CD8-positive, alpha-beta T cell (primary cell): ENCODE measurements at regions of chr11 and their contacts with region 1.

Region 1: DNA sequence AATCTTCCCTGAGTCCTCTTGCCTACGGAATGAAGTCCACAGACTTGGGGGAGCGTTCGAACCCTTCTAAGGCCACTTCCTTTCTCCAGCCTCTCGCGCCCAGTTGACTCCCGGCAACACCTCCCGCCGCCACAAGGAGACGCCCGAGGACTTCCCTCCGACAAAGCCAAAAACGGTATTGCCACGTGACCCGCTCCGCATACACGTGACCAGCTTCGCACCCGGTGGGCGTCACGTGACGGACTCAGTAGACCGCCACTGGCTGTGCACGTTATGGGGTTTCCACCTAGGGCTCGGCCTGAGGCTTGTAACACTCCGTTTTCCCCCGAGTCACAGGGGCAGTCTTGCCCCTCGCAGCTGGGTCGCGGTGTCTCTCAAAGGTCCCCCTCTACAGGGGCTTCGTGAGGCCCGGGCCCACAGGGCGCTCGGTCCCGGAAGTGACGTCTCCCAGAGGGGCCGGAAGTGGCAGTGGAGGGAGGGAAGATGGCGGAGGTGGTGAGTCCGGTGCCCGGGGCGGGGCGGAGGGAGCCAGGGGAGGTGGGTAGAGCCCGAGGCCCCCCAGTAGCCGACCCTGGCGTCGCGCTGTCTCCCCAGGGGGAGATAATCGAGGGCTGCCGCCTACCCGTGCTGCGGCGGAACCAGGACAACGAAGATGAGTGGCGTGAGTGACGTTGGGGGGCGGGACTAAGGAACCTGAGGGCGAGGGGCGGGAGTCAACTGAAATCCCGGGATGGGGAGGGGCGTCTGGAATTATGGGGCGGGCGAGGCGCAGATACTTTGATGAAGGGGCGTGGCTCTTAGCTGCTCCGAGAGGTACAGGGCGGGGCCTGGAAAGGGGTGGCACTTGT is at the start of gene KAT5:
- DNase-seq: peak; percentile 95 to 99 (median 98)
- ATAC-seq: peak; percentile 83
- H3K4me3 ChIP-seq: peak within 1 kb of the TSS; percentile 92 to 99
- H3K4me3 Mint-ChIP-seq: peak within 1 kb of the TSS; percentile 95
- H3K27ac ChIP-seq: peak within 1 kb of the TSS; percentile 99 to 100
- H3K27ac Mint-ChIP-seq: peak within 1 kb of the TSS; percentile 100
- H3K4me1 ChIP-seq: peaks cover 14% of the 10 kb centered on the region
- H3K4me1 Mint-ChIP-seq: peaks cover 21% of the 10 kb centered on the region
- H3K27me3 ChIP-seq: no peaks in the 10 kb centered on the region
- H3K27me3 Mint-ChIP-seq: no peaks in the 10 kb centered on the region
- CTCF ChIP-seq: peak; percentile 95
- total RNA-seq, gene KAT5: 149 to 151 TPM

Region 2: DNA sequence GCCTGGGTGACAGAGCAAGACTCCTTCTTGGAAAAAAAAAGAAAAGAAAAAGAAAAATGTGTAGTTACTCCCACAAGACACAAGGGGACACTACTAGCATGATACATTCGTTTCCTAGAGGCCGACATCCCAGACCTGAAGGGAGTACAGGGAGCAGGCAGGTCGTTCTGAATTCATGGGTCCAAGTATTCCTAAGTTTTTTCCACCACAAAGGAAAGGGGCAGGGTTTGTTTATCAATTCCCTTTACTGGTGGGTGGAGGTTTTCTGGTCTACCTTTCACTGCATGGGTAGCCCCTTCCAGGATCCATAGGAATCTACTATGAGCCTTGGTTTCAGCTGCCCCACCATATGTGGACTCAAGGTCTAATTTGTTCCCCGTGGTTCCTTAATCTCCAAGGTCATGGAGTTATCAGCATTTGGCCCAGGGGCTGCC is 345.7 kb before region 1 on chr11:
- CTCF ChIA-PET with region 1: no interaction called
- POLR2A ChIA-PET with region 1: no interaction called
- intact Hi-C with region 1: loop called in 1 of 2 experiments (anchors 2 kb)
- DNase-seq: peak in 3 of 9 experiments; percentile 31 to 80 (median 70)
- ATAC-seq: peak; percentile 92
- H3K4me3 ChIP-seq: no peak overlapping the region
- H3K4me3 Mint-ChIP-seq: no peak overlapping the region
- H3K27ac ChIP-seq: no peak overlapping the region
- H3K27ac Mint-ChIP-seq: no peak overlapping the region
- H3K4me1 ChIP-seq: peaks cover 6% of the 10 kb centered on the region
- H3K4me1 Mint-ChIP-seq: peaks cover 5% of the 10 kb centered on the region
- H3K27me3 ChIP-seq: no peaks in the 10 kb centered on the region
- H3K27me3 Mint-ChIP-seq: no peaks in the 10 kb centered on the region
- CTCF ChIP-seq: peak; percentile 81

Region 3: GRCh38 chr11:65773784-65774411 is 61.9 kb after region 1 on chr11:
- CTCF ChIA-PET with region 1: interaction called, 30 read pairs
- POLR2A ChIA-PET with region 1: no interaction called
- intact Hi-C with region 1: loop called (anchors 1 kb)
- DNase-seq: no peak
- ATAC-seq: no peak
- H3K4me3 ChIP-seq: no peak overlapping the region
- H3K4me3 Mint-ChIP-seq: no peak overlapping the region
- H3K27ac ChIP-seq: no peak overlapping the region
- H3K27ac Mint-ChIP-seq: no peak overlapping the region
- H3K4me1 ChIP-seq: peaks cover 6% of the 10 kb centered on the region
- H3K4me1 Mint-ChIP-seq: peaks cover 7% of the 10 kb centered on the region
- H3K27me3 ChIP-seq: no peaks in the 10 kb centered on the region
- H3K27me3 Mint-ChIP-seq: no peaks in the 10 kb centered on the region
- CTCF ChIP-seq: no peak

Region 4: GRCh38 chr11:65833297-65834030 is 121.5 kb after region 1 on chr11 and contains the start of gene SNX32:
- CTCF ChIA-PET with region 1: interaction called, 5 read pairs
- POLR2A ChIA-PET with region 1: no interaction called
- intact Hi-C with region 1: loop called in 1 of 2 experiments (anchors 1 kb)
- DNase-seq: peak; percentile 90 to 97 (median 94)
- ATAC-seq: peak; percentile 99
- H3K4me3 ChIP-seq: peak within 1 kb of the TSS; percentile 79 to 91
- H3K4me3 Mint-ChIP-seq: no peak within 1 kb of the TSS
- H3K27ac ChIP-seq: peak within 1 kb of the TSS; percentile 66 to 80
- H3K27ac Mint-ChIP-seq: peak within 1 kb of the TSS; percentile 64
- H3K4me1 ChIP-seq: peaks cover 17% of the 10 kb centered on the region
- H3K4me1 Mint-ChIP-seq: peaks cover 6% of the 10 kb centered on the region
- H3K27me3 ChIP-seq: peaks cover 0 to 3% of the 10 kb centered on the region in 2 experiments
- H3K27me3 Mint-ChIP-seq: no peaks in the 10 kb centered on the region
- CTCF ChIP-seq: no peak
- total RNA-seq, gene SNX32: 0.52 to 0.69 TPM

Region 5: GRCh38 chr11:65988791-65989592 is 277.0 kb after region 1 on chr11:
- CTCF ChIA-PET with region 1: interaction called, 9 read pairs
- POLR2A ChIA-PET with region 1: interaction called, 4 read pairs
- intact Hi-C with region 1: loop called (anchors 1 kb)
- DNase-seq: peak; percentile 84 to 96 (median 91)
- ATAC-seq: peak; percentile 98
- H3K4me3 ChIP-seq: no peak overlapping the region
- H3K4me3 Mint-ChIP-seq: no peak overlapping the region
- H3K27ac ChIP-seq: peak overlapping the region in 1 of 2 experiments; percentile 20
- H3K27ac Mint-ChIP-seq: peak overlapping the region; percentile 6
- H3K4me1 ChIP-seq: no peaks in the 10 kb centered on the region
- H3K4me1 Mint-ChIP-seq: peaks cover 5% of the 10 kb centered on the region
- H3K27me3 ChIP-seq: no peaks in the 10 kb centered on the region
- H3K27me3 Mint-ChIP-seq: no peaks in the 10 kb centered on the region
- CTCF ChIP-seq: peak; percentile 98

Region 6: DNA sequence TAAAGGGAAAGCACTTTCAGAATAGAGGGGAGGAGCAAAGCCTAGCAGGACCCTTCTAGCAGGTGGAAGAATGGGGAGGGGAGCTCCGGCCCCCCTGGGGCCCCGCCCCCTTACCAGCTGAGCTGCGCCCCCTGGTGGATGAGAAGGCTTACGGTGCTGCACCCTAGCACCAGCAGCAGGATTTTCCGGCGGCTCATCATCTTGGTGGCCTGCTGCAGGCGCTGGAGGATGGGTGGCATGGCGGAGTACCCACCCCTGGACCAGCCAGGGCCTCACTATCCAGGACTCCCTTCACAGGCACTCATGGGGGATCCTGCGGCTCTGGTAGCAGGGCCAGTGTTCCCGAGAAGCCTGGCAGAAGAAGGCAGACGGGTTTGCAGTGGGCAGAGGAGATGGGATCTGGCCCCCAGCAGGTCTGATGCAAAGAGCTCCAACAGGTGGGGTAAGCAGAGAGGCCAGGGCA is 333.2 kb after region 1 on chr11:
- CTCF ChIA-PET with region 1: interaction called, 4 read pairs
- POLR2A ChIA-PET with region 1: no interaction called
- intact Hi-C with region 1: loop called in 1 of 2 experiments (anchors 2 kb)
- DNase-seq: peak; percentile 60 to 90 (median 87)
- ATAC-seq: peak; percentile 98
- H3K4me3 ChIP-seq: no peak overlapping the region
- H3K4me3 Mint-ChIP-seq: no peak overlapping the region
- H3K27ac ChIP-seq: no peak overlapping the region
- H3K27ac Mint-ChIP-seq: no peak overlapping the region
- H3K4me1 ChIP-seq: peaks cover 13% of the 10 kb centered on the region
- H3K4me1 Mint-ChIP-seq: peaks cover 12% of the 10 kb centered on the region
- H3K27me3 ChIP-seq: no peaks in the 10 kb centered on the region
- H3K27me3 Mint-ChIP-seq: no peaks in the 10 kb centered on the region
- CTCF ChIP-seq: peak; percentile 83